Activated naive CD4-positive, alpha-beta T cell treated with anti-CD3 and anti-CD28 coated beads for 36 hours (primary cell): ENCODE measurements at regions of chr19 and their contacts with region 1.

Region 1: DNA sequence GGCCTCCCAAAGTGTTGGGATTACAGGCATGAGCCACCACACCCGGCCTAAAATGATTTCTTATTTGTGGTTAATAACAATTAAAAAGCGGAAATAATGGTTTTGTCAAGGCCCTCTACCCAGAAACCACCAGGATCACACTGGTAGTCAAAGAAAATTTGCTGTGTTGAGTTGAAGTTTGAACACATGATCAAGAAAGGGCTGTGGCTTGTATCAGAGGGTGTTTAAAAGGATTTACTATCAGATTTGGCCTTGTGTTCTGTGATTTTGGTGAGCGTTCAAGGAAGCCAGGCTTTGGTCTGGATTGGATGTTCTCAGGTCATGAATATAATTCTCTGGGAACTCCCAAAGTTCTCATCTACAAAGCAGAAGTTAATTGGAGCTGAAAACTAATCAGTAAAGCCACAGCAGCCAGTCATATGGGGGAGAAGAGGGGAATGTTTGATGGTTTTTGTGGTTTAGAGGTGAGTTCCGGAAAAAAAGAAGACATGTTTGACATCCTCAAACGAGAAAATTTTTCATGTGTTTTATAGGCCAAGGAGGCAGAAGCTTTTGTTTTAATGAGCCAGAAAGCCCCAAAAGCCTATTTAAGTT is 10.6 kb upstream of the ZNF556 start:
- DNase-seq: peak; percentile 52
- H3K4me3 Mint-ChIP-seq: no peak overlapping the region
- H3K27ac Mint-ChIP-seq: peak overlapping the region; percentile 57
- H3K4me1 Mint-ChIP-seq: peaks cover 23% of the 10 kb centered on the region
- H3K27me3 Mint-ChIP-seq: no peaks in the 10 kb centered on the region

Region 2: GRCh38 chr19:2840794-2841790 is 15.5 kb before region 1 on chr19 and contains the start of gene ZNF555:
- CTCF ChIA-PET with region 1: interaction called, 4 read pairs
- intact Hi-C with region 1: loop called (anchors 1 kb)
- DNase-seq: peak; percentile 100
- H3K4me3 Mint-ChIP-seq: peak within 1 kb of the TSS; percentile 83
- H3K27ac Mint-ChIP-seq: peak within 1 kb of the TSS; percentile 75
- H3K4me1 Mint-ChIP-seq: peaks cover 12% of the 10 kb centered on the region
- H3K27me3 Mint-ChIP-seq: no peaks in the 10 kb centered on the region
- total RNA-seq, gene ZNF555: 1.7 to 3.0 TPM